Panc1 (cell line): ENCODE measurements at regions of chr4 and their contacts with region 1.

Region 1: DNA sequence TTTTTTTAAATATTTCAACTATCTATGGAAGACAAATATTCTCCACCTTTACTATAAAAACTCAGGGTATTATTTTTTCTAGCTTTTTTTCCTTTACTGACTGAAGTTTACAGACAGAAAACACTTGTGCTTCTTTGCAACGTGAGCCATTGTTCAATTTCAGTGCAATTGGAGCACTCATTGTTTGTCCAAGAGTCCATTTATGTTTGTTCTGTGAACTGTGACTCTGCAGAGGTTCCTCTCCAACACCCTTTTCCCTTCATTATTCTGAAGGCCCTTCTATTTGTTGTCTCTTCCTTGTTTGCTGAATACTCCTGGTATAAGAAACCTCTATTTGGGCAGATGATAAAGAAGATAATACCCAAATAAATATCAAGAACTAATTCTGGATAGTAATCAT is 37.4 kb downstream of the DAPP1 start:
- DNase-seq: no peak
- ATAC-seq: no peak
- H3K4me3 ChIP-seq: no peak overlapping the region
- H3K27ac ChIP-seq: no peak overlapping the region
- H3K4me1 ChIP-seq: no peaks in the 10 kb centered on the region
- H3K27me3 ChIP-seq: no peaks in the 10 kb centered on the region; the same call in 1 of the 2 replicates
- CTCF ChIP-seq: no peak

Region 2: DNA sequence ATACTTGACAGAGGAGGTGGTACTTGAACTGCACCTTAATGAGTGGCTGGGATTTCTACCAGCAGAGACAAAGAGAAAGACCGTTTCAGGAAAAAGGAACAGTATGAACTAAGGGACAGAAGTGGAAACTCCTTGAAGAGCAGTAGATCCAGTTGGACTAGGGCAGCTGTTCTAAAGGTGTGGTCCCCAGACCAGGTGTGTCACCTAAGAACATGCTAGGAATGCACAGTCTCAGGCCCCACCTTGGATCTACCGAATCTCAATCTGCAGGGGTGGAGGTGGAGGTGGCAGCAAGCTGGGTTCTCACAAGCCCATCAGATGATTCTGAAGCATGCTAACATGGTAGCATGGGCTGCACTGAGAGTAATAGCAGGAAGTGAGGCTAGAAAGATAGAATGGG is 15.1 kb before region 1 on chr4:
- CTCF ChIA-PET with region 1: no interaction called
- POLR2A ChIA-PET with region 1: no interaction called
- in situ Hi-C with region 1: no loop called
- intact Hi-C with region 1: loop called (anchors 2 kb)
- DNase-seq: no peak
- ATAC-seq: no peak
- H3K4me3 ChIP-seq: no peak overlapping the region
- H3K27ac ChIP-seq: no peak overlapping the region
- H3K4me1 ChIP-seq: no peaks in the 10 kb centered on the region
- H3K27me3 ChIP-seq: no peaks in the 10 kb centered on the region; the same call in 1 of the 2 replicates
- CTCF ChIP-seq: no peak